Gastrocnemius medialis (tissue), 4 donors: ENCODE measurements at regions of chr1 and their contacts with region 1.

Region 1: GRCh38 chr1:182720463-182720862 is 36.1 kb upstream of the RGS8 start:
- DNase-seq: no peak
- ATAC-seq: no peak
- H3K4me3 ChIP-seq: no peak overlapping the region
- H3K27ac ChIP-seq: no peak overlapping the region
- H3K4me1 ChIP-seq: no peaks in the 10 kb centered on the region
- H3K27me3 ChIP-seq: no peaks in the 10 kb centered on the region
- CTCF ChIP-seq: no peak
- POLR2A ChIP-seq: no peak

Region 2: DNA sequence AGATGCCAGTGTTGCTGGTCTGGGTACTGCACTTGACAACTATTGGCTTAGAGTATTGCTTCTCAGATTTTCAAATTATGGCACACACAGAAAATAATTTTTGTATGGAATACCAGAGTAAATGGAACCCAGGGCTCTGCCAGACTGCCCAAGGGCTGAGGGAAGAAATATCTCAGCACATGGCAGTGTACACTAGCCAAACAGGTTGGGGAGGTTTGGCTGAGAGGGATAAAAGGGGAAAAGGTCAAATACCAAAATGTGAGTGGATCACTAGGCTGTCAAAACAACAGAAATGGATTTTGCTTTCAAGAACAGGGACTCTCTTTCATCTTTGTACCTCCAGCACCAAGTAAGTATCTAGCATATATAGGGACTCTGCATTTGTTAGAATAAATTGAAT is 33.1 kb before region 1 on chr1:
- in situ Hi-C with region 1: no loop called
- intact Hi-C with region 1: no loop called
- DNase-seq: no peak
- ATAC-seq: no peak
- H3K4me3 ChIP-seq: no peak overlapping the region
- H3K27ac ChIP-seq: no peak overlapping the region
- H3K4me1 ChIP-seq: no peaks in the 10 kb centered on the region
- H3K27me3 ChIP-seq: no peaks in the 10 kb centered on the region
- CTCF ChIP-seq: no peak
- POLR2A ChIP-seq: no peak

Region 3: DNA sequence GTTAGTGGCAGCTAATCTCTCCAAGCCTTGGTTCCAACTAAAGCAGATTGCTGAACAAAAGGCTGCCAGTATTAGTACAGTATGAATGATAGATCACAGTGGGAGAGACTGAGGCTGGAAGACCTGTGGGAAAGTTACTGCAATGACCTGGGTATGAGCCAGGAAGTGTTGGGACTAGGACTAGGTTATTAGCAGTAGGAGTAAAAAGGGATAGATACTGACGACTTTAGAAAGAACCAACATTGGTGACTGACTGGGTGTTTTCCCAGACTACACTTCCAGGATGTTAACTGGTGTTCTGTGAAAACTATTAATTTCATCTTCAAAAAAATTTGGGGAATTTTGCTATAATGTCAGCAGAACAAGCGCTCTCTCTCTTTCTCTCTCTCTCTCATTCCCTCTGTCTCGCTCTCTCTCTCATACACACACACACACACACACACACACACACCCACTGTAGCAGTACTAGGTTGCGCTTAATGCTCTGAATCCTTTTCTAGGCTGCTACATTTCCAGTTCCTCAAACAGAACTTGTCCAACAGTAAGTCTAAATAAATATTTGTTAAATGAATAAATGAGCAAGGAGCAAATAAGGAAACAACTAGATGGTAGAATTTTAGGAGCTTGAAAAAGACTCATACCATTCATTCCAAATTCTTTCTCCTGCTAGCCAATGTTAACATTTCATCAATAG is 11.5 kb after region 1 on chr1:
- in situ Hi-C with region 1: no loop called
- intact Hi-C with region 1: loop called (anchors 1 kb)
- DNase-seq: no peak
- ATAC-seq: no peak
- H3K4me3 ChIP-seq: no peak overlapping the region
- H3K27ac ChIP-seq: no peak overlapping the region
- H3K4me1 ChIP-seq: no peaks in the 10 kb centered on the region
- H3K27me3 ChIP-seq: no peaks in the 10 kb centered on the region
- CTCF ChIP-seq: no peak
- POLR2A ChIP-seq: no peak

Region 4: DNA sequence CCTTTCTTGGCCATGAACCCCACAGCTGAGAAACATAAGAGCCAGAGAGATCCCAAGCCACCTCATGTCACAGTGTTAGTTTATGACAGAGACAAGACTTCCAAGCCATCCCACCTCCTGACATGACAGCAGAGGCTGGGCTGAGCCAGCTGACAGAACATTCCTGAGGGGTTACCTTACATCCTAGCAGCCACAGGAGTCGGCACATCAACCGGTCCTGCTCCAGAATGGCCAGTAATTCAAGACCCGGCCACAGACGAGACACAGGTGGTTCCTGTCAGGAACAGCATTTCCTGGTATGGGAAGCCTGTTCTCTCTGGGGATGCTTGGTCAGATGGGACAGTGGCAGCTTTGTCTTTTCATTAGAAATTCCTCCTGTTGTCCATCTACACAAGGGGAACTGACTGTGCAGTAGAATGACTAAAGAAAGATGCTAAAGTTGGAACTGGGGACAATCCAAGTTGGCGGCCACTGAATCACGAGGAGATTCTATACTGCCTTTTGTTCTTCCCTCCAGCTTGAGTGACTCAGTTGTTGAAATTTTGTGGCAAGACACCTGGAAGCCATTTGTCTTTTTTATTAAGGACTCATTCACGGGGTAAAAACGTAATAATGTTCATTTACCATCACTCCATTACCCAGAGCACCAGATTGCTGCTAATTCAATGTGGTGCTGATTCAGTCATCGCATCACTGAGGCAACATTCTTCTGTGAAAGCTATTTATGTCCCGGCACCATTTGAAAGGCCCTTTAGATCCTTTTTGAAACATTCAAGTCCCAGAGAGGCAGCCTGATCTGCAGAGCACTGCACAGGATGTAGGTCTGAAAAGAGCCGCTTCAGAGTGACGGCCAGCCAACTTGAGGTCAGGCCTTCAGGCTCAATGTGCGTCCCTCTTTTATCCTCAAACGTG is 31.9 kb after region 1 on chr1:
- in situ Hi-C with region 1: no loop called
- intact Hi-C with region 1: no loop called
- DNase-seq: peak in 1 of 2 donors; percentile 18
- ATAC-seq: peak; percentile 75 to 78
- H3K4me3 ChIP-seq: no peak overlapping the region
- H3K27ac ChIP-seq: peak overlapping the region in 3 of 4 donors; percentile 28 to 53 (median 36)
- H3K4me1 ChIP-seq: peaks cover 11 to 16% of the 10 kb centered on the region in 2 donors
- H3K27me3 ChIP-seq: no peaks in the 10 kb centered on the region
- CTCF ChIP-seq: no peak
- POLR2A ChIP-seq: no peak

Region 5: DNA sequence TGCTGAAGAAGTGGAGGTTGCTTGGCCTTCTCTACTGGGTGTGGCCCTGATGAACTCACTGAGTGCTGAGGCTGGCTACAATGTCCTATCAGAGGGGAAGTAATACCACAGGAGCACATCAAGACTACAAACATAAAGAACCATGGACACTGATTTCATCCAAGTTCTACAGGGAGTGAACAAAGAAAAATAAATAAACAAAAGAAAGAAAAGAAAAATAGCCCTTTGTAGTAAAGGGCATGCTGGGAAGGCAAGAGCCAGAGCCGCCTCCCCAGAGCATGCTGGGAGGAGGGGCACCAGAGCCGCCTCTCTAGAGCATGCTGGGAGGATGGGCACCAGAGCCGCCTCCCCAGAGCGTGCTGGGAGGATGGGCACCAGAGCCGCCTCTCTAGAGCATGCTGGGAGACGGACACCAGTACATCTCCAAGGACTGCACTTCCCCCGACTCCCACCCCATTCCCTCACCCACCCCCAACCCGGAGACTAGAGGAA is 531.5 kb after region 1 on chr1:
- in situ Hi-C with region 1: no loop called
- intact Hi-C with region 1: no loop called
- DNase-seq: no peak
- ATAC-seq: no peak
- H3K4me3 ChIP-seq: no peak overlapping the region
- H3K27ac ChIP-seq: no peak overlapping the region
- H3K4me1 ChIP-seq: no peaks in the 10 kb centered on the region
- H3K27me3 ChIP-seq: no peaks in the 10 kb centered on the region
- CTCF ChIP-seq: no peak
- POLR2A ChIP-seq: no peak